HEK293 (cell line): ENCODE measurements at regions of chr16 and their contacts with region 1.

Region 1: DNA sequence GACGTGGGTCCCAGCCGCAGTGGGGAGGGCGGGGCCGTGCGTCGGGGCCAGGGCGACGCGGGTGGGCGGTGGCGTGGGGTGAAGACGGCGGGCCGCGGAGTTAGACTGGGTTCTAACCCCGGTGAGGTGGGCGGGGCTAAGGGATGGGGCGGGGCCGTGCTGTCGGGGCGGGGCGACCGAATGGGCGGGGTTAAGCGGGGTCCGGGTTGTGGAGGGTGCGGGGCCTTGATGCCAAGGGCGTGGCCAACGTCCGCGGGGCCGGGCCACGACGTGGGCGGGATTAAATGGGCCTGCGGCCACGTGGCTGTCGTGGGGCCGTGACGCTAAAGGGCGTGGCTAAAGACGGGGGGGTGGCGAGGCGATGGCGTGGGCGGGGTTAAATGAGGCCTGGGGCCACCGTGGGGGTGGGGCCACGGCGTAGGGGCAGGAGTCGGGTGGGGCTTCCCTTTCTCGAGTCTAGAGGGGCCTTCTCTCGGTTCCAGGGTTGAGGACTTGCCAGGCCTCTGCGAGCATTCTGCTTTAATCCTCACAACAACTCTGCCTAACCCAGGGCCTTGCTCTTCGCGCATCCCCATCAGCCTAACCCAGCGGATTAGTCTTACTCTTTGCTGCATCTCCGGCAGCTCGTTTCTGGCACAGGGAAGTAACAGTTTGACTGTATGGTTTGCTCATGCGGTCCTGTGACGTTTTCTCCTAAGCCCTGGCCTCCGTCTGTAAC is 739 bp downstream of the TCF25 start:
- H3K4me3 ChIP-seq: peak overlapping the region; percentile 83
- H3K27ac ChIP-seq: peak overlapping the region; percentile 98
- H3K4me1 ChIP-seq: no peaks in the 10 kb centered on the region
- CTCF ChIP-seq: no peak

Region 2: GRCh38 chr16:89525146-89525913 is 348.8 kb before region 1 on chr16:
- CTCF ChIA-PET with region 1: no interaction called
- POLR2A ChIA-PET with region 1: no interaction called
- H3K4me3 ChIP-seq: no peak overlapping the region
- H3K27ac ChIP-seq: no peak overlapping the region
- H3K4me1 ChIP-seq: no peaks in the 10 kb centered on the region
- CTCF ChIP-seq: no peak

Region 3: GRCh38 chr16:89815639-89816348 is 58.3 kb before region 1 on chr16:
- CTCF ChIA-PET with region 1: interaction called, 3 read pairs
- POLR2A ChIA-PET with region 1: interaction called, 11 read pairs
- H3K4me3 ChIP-seq: peak overlapping the region; percentile 73
- H3K27ac ChIP-seq: peak overlapping the region; percentile 89
- H3K4me1 ChIP-seq: no peaks in the 10 kb centered on the region
- CTCF ChIP-seq: no peak

Region 4: DNA sequence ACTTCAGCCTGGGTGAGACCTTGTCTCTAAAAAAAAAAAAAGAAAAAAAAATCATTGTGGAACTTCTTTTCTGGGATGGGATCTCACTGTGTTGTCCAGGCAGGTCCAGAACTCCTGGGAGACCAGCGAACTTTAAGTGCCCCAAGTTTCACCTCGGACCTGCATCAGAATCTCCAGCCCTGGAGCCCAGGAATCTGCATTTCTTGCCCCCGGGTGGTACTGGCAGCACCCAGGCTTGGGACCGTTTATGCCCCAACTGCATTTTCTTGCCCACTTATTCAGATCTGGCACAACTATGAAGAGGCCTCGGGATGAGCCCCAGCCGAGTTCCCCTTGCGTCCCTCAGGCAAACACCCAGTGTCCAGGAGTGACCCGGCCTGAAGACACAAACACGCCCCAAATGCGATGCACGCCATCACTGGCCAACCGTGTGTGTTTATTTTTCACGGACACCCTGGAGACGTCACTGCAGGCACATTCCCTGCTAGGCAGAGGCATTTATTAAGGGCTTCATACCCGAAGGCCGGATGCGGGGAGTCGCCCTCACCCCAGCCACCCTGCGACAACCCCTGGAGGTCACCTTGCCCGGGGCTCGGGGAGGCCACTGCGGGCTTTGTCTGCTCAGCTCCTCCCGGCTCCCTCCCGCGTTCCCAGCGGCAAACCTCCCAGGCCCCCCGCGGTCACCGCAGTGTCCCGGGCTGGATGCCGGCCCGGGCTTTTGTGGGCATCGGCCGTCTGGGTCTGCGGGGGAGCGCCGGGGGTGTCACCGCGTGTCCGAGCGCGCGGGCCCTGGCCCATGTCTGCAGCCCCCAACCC is 46.5 kb before region 1 on chr16:
- CTCF ChIA-PET with region 1: no interaction called
- POLR2A ChIA-PET with region 1: interaction called, 10 read pairs
- H3K4me3 ChIP-seq: peak overlapping the region; percentile 41
- H3K27ac ChIP-seq: peak overlapping the region; percentile 46; the same call in 1 of the 2 replicates
- H3K4me1 ChIP-seq: peaks cover 12% of the 10 kb centered on the region
- CTCF ChIP-seq: no peak; the same call in 1 of the 2 replicates

Region 5: DNA sequence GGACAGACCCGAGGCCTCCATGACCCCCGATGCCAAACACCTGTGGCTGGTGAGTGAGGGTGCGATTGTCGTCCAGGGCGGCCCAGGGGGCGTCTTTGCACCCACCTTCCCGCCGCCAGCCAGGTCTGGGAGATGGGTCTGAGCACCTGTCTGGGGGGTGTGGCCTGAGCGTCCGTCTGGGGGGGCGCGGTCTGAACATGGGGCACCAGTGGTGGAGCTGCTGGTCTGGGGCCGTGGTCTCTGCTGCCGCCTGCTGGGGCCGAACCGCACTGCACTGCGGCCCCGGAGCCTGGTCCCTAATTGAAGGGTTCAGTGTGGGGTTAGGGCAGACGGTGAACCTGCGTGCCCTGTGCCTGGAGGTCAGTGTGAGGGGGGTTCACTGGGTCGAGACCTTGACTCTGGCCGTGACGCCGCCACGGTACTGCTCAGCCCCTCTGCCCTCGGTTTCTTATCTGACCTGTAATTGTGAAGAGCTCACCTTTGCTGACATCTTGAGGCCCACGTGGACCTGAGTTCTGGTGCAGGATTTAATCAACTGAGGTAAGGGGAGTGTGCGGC is 13.3 kb before region 1 on chr16:
- CTCF ChIA-PET with region 1: interaction called, 34 read pairs
- POLR2A ChIA-PET with region 1: interaction called, 22 read pairs
- H3K4me3 ChIP-seq: no peak overlapping the region
- H3K27ac ChIP-seq: no peak overlapping the region
- H3K4me1 ChIP-seq: no peaks in the 10 kb centered on the region
- CTCF ChIP-seq: peak; percentile 95

Region 6: DNA sequence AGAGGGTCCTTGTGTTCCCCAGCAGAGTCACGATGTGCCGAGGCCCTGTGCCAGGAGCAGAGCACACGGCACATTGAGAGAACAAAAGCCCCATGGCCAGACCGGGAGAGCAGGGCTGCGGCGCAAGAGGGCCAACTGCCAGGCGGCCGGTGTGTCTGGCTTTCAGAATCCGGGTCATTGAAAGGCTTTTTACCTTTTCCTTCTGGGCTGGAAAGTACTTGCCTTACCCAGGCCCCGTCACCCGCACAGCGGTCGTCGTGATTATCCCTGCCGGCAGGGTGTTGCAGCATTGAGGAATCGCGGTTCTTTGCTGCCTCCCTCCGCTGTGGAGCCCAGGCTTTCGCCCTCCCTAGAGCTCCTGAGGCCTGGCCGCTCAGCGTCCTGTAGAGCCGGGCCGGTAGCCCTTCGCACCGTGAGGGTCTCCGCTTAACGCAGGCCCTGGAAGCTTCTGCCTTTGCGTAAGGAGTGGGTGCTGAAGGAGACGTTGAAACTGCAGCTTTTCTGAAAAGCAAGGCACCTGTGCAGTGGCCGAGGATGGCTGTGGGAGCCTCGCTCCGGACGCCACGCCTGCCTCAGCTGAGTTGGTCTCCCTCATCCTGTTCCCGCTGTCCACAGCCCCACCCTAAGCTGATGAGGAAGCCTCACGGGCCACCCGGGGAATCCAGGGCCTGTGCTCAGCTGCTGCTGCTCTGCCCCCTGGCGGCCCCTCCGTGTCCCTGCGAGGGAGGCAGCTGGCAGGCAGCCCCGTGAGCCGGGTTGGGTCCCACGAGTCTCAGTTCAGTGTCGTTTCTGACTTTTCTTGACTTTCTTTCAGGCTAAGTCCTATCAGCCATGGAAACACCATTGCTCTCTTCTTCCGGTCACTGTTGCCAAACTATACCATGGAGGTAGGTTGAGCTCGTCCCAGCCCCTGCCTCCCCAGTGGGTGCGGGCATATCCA is 35.9 kb after region 1 on chr16:
- CTCF ChIA-PET with region 1: interaction called, 6 read pairs
- POLR2A ChIA-PET with region 1: interaction called, 12 read pairs
- H3K4me3 ChIP-seq: no peak overlapping the region
- H3K27ac ChIP-seq: no peak overlapping the region
- H3K4me1 ChIP-seq: no peaks in the 10 kb centered on the region
- CTCF ChIP-seq: peak; percentile 79

Region 7: GRCh38 chr16:89922884-89923690 is 49.0 kb after region 1 on chr16 and contains the start of gene TUBB3:
- CTCF ChIA-PET with region 1: interaction called, 4 read pairs
- POLR2A ChIA-PET with region 1: interaction called, 15 read pairs
- H3K4me3 ChIP-seq: peak within 1 kb of the TSS; percentile 38
- H3K27ac ChIP-seq: peak within 1 kb of the TSS; percentile 70
- H3K4me1 ChIP-seq: peaks cover 22% of the 10 kb centered on the region
- CTCF ChIP-seq: peak; percentile 57; the same call in 1 of the 2 replicates